Activated naive CD4-positive, alpha-beta T cell treated with anti-CD3 and anti-CD28 coated beads for 36 hours (primary cell): ENCODE measurements at regions of chr9 and their contacts with region 1.

Region 1: GRCh38 chr9:122092611-122093506 is at the start of gene TTLL11:
- DNase-seq: peak; percentile 97
- H3K4me3 Mint-ChIP-seq: peak within 1 kb of the TSS; percentile 85
- H3K27ac Mint-ChIP-seq: no peak within 1 kb of the TSS
- H3K4me1 Mint-ChIP-seq: peaks cover 32% of the 10 kb centered on the region
- H3K27me3 Mint-ChIP-seq: peaks cover 3% of the 10 kb centered on the region
- total RNA-seq, gene TTLL11: 0.84 to 0.86 TPM

Region 2: DNA sequence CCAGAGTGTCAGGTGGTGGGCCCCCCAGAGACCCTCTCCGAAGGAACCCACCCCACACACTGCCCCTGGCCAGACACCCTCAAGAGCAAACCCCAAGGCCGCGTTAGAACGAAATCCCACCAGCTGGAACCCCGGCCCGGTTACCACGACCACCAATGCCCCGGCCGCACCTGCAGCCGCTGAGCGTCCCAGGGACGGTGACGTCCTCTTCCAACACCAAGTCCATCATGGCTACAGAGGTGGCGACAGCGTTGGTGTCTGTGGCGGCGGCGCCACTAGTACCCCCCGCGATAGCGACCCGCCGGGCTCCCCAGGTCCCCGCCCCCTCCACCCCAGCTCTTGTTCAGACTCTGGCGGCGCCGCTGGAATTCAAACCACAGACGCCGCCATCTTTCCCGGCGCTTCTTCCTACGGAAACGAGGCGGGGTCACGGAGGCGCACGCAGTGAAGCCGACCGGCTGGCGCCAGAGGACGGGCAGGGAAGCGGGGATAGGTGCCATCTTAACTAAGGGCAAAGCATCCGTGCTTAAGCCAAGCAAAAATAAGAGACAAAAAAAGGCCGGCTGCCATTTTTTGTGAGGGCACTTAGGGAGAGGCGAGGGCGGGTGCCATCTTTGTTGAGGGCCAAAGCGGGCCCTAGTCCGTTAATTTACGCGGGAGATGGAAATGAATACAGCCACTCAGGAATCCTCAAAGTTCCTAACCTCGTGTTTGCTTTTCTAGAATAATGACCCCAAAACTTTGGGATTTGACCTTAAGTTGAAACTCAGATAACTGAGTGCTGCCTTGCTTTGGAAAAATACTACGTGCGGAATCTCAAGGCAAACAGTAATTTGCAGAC is 1512.9 kb before region 1 on chr9 and contains the start of gene CDK5RAP2:
- CTCF ChIA-PET with region 1: no interaction called
- intact Hi-C with region 1: loop called (anchors 10 kb)
- DNase-seq: peak; percentile 96
- H3K4me3 Mint-ChIP-seq: peak within 1 kb of the TSS; percentile 97
- H3K27ac Mint-ChIP-seq: peak within 1 kb of the TSS; percentile 92
- H3K4me1 Mint-ChIP-seq: peaks cover 47% of the 10 kb centered on the region
- H3K27me3 Mint-ChIP-seq: no peaks in the 10 kb centered on the region
- total RNA-seq, gene CDK5RAP2: 92.7 to 99.7 TPM

Region 3: GRCh38 chr9:122159026-122159924 is 66.4 kb after region 1 on chr9 and contains the starts of genes MORN5 and NDUFA8:
- CTCF ChIA-PET with region 1: interaction called, 8 read pairs
- intact Hi-C with region 1: loop called (anchors 2 kb)
- DNase-seq: peak; percentile 96
- H3K4me3 Mint-ChIP-seq: peak within 1 kb of the TSS; percentile 99
- H3K27ac Mint-ChIP-seq: peak within 1 kb of the TSS; percentile 86
- H3K4me1 Mint-ChIP-seq: peaks cover 34% of the 10 kb centered on the region
- H3K27me3 Mint-ChIP-seq: peaks cover 6% of the 10 kb centered on the region
- total RNA-seq, gene MORN5: not detected
- total RNA-seq, gene NDUFA8: 45.5 to 47.9 TPM

Region 4: DNA sequence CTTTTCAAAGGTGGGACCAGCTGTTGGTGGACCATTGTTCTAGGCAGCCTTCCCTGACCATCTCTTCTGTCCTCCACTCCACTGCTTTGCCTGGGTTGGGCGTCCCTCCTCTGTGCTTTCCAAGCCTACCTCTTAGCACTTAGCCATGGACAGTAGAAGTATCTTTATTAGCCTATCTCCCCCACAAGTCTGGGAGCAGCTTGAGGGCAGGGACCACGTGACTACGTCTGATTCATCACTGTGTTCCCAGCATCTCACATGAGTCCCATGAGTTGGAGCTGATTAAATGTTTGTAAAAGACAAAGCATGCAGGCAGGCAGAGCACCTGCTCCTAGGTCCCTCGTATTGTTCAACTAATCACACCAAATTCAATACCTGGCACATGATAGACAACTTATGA is 87.8 kb after region 1 on chr9:
- CTCF ChIA-PET with region 1: no interaction called
- intact Hi-C with region 1: no loop called
- DNase-seq: no peak
- H3K4me3 Mint-ChIP-seq: no peak overlapping the region
- H3K27ac Mint-ChIP-seq: no peak overlapping the region
- H3K4me1 Mint-ChIP-seq: no peaks in the 10 kb centered on the region
- H3K27me3 Mint-ChIP-seq: peaks cover 18% of the 10 kb centered on the region